GM13976 (cell line): ENCODE measurements at regions of chr18 and their contacts with region 1.

Region 1: GRCh38 chr18:32552421-32553030 is 81.8 kb upstream of the GAREM1 start:
- DNase-seq: peak; percentile 78
- CTCF ChIP-seq: peak; percentile 65

Region 2: GRCh38 chr18:32167975-32168730 is 384.4 kb before region 1 on chr18:
- in situ Hi-C with region 1: loop called (anchors 10 kb)
- DNase-seq: no peak
- CTCF ChIP-seq: no peak

Region 3: GRCh38 chr18:32289483-32290075 is 262.9 kb before region 1 on chr18:
- in situ Hi-C with region 1: loop called (anchors 10 kb)
- DNase-seq: peak; percentile 53
- CTCF ChIP-seq: peak; percentile 31